PC-3 (cell line): ENCODE measurements at regions of chr10 and their contacts with region 1.

Region 1: DNA sequence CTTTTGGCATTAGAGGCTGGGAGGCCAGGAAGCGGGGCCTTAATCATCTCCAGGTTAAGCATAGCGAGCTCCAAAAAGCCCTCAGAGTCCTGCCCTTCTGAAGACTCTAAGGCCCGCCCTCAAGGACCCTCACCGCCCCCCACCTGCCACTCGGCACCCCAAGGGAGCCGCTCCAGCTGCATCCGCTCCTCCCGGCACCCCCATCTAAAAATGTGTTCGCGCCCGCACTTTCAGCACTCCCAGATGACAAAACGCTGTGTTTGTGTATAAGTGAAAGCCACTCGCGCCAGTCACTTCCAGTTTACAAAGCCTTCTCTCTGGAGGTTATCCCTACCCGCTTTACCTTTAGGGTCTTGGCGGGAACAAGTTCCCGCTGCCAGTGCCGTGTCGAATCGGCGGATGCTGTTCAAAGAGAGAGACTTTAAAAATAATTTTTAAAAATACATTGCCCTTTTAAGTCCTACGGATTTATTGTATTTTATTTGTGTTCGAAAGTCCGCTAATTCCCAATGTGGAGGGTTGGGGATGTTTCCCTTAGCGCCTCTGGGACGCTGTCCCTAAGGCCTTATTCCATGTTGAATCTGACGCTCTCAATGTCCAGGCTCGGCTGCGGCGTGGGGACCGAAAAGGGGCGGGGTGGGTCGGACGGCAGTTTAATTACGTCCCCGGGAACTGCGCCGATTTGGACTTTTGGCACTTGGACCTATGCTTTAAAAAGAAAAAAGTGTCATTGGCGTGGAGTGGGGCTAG is at the starts of genes DCLRE1A and NHLRC2:
- DNase-seq: peak; percentile 67
- ATAC-seq: peak; percentile 66
- H3K4me3 ChIP-seq: peak within 1 kb of the TSS; percentile 93
- H3K27ac ChIP-seq: peak within 1 kb of the TSS; percentile 55
- H3K4me1 ChIP-seq: peaks cover 43% of the 10 kb centered on the region
- H3K27me3 ChIP-seq: no peaks in the 10 kb centered on the region
- CTCF ChIP-seq: no peak
- total RNA-seq, gene DCLRE1A: 3.3 and 5.0 TPM in 2 replicates
- total RNA-seq, gene NHLRC2: 17.5 and 24.1 TPM in 2 replicates

Region 2: GRCh38 chr10:113704637-113705343 is 149.4 kb before region 1 on chr10:
- CTCF ChIA-PET with region 1: no interaction called
- POLR2A ChIA-PET with region 1: no interaction called
- intact Hi-C with region 1: loop called (anchors 5 kb)
- DNase-seq: peak; percentile 51
- ATAC-seq: peak; percentile 73
- H3K4me3 ChIP-seq: no peak overlapping the region
- H3K27ac ChIP-seq: no peak overlapping the region
- H3K4me1 ChIP-seq: peaks cover 8% of the 10 kb centered on the region; the same call in 1 of the 2 replicates
- H3K27me3 ChIP-seq: no peaks in the 10 kb centered on the region
- CTCF ChIP-seq: peak; percentile 73

Region 3: DNA sequence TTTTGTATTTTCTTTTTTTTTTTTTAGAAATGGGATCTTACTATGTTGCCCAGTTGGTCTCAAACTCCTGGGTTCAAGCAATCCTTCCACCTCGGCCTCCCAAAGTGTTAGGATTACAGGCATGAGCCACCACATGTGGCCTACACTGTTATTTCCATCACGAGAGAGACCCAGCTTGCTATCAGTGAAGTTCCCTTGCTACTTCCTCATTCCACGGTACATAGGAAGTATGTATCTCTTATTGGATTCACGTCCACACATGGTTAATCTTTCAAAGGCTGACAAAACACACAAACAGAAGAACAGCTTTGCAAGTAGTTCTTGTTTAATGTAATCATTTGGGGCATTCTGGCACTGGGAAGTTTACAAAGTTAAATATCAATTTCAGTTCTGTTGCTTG is 51.2 kb before region 1 on chr10:
- CTCF ChIA-PET with region 1: no interaction called
- POLR2A ChIA-PET with region 1: no interaction called
- intact Hi-C with region 1: loop called (anchors 2 kb)
- DNase-seq: no peak
- ATAC-seq: no peak
- H3K4me3 ChIP-seq: no peak overlapping the region
- H3K27ac ChIP-seq: no peak overlapping the region
- H3K4me1 ChIP-seq: no peaks in the 10 kb centered on the region
- H3K27me3 ChIP-seq: peaks cover 11% of the 10 kb centered on the region; the same call in 1 of the 2 replicates
- CTCF ChIP-seq: no peak

Region 4: DNA sequence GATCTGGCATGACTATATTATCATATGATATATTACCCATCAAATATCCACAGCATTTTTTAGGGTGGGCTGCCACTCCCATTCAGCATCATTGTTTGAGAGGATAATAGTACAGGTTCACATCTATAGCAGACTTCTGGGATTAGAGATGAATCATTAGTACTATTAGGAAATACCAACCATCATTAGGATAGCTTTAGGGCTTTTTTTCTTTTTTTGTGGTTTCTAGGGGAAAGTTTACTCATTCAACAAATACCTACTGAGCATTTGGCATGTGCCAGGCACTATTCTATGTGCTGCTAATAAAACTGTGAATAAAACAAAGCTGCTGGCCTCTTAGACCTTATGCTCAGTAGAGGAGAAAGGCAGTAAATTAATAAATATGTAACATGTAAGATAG is 40.8 kb after region 1 on chr10:
- CTCF ChIA-PET with region 1: no interaction called
- POLR2A ChIA-PET with region 1: no interaction called
- intact Hi-C with region 1: loop called (anchors 2 kb)
- DNase-seq: peak; percentile 82
- ATAC-seq: peak; percentile 95
- H3K4me3 ChIP-seq: no peak overlapping the region
- H3K27ac ChIP-seq: no peak overlapping the region
- H3K4me1 ChIP-seq: peaks cover 13% of the 10 kb centered on the region
- H3K27me3 ChIP-seq: no peaks in the 10 kb centered on the region
- CTCF ChIP-seq: no peak

Region 5: GRCh38 chr10:114043532-114044246 is 189.5 kb after region 1 on chr10 and contains the start of gene ADRB1:
- CTCF ChIA-PET with region 1: no interaction called
- POLR2A ChIA-PET with region 1: no interaction called
- intact Hi-C with region 1: loop called (anchors 5 kb)
- DNase-seq: peak; percentile 19
- ATAC-seq: peak; percentile 57
- H3K4me3 ChIP-seq: peak within 1 kb of the TSS; percentile 63
- H3K27ac ChIP-seq: no peak within 1 kb of the TSS
- H3K4me1 ChIP-seq: peaks cover 8% of the 10 kb centered on the region
- H3K27me3 ChIP-seq: peaks cover 56% of the 10 kb centered on the region
- CTCF ChIP-seq: no peak
- total RNA-seq, gene ADRB1: 0.15 and 0.29 TPM in 2 replicates

Region 6: DNA sequence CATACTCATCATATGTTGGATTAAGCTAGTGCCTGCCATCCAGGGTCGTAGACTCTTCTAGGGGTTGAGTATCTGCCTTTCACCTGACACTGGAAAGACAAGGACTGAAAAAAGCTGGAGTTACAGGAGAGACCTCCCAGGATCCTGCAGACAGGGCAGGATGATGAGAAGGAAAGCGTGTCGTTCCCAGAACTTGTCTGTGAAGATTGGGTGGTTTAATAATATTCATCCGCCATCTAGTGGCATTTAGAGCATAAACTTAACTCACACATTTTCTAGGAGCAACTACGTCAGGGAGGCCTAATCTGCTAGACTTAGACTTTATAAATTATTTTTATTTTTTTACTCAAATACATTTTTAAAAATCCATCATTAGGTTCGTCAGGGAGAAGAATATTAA is 249.1 kb after region 1 on chr10:
- CTCF ChIA-PET with region 1: no interaction called
- POLR2A ChIA-PET with region 1: no interaction called
- intact Hi-C with region 1: loop called (anchors 5 kb)
- DNase-seq: peak; percentile 64
- ATAC-seq: peak; percentile 64
- H3K4me3 ChIP-seq: no peak overlapping the region
- H3K27ac ChIP-seq: no peak overlapping the region
- H3K4me1 ChIP-seq: peaks cover 16% of the 10 kb centered on the region; the same call in 1 of the 2 replicates
- H3K27me3 ChIP-seq: no peaks in the 10 kb centered on the region
- CTCF ChIP-seq: peak; percentile 61